Aorta (tissue), 5 donors: ENCODE measurements at regions of chr15 and their contacts with region 1.

Region 1: DNA sequence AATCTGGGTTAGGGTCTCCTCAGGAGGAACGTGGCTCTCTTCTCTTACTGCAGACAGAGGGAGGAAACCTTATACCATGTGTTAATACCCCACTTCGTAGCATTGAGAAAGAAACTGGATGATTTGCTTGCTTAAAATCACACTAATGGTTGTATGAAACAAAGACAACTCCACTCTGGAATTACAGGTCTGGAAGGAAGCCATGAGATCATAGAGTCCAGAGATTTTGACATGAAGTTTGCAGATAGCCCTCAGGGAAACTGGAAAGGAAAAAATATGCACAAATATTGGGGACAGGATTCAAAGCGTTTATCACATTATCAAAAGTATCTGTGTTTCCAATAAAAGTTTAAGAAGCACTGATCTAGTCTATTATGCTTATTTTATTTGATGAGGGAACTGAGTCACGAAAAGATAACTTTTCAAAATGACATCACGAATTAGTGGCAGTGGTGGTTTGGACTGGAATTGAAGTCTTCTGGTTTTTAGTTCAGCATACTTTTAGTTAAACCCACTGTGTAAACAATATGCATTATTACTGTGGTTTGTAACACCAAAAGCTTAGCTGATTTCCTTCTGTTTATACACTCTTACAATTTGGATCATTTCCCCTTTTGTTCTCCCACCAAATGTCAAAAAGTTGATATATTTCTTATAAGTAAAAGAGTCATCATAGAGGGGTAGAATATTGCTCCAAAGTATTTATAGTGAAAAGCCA is 16.8 kb downstream of the FGF7 start:
- DNase-seq: no peak
- ATAC-seq: no peak
- H3K4me3 ChIP-seq: no peak overlapping the region
- H3K27ac ChIP-seq: no peak overlapping the region
- H3K4me1 ChIP-seq: peaks cover 0 to 2% of the 10 kb centered on the region in 2 donors
- H3K27me3 ChIP-seq: no peaks in the 10 kb centered on the region

Region 2: GRCh38 chr15:49538520-49538919 is 98.7 kb after region 1 on chr15:
- intact Hi-C with region 1: no loop called
- DNase-seq: no peak
- ATAC-seq: no peak
- H3K4me3 ChIP-seq: no peak overlapping the region
- H3K27ac ChIP-seq: no peak overlapping the region
- H3K4me1 ChIP-seq: no peaks in the 10 kb centered on the region
- H3K27me3 ChIP-seq: no peaks in the 10 kb centered on the region

Region 3: GRCh38 chr15:50003786-50004334 is 564.0 kb after region 1 on chr15:
- intact Hi-C with region 1: loop called in 1 of 2 experiments (anchors 10 kb)
- DNase-seq: peak; percentile 88 to 93
- ATAC-seq: peak; percentile 94
- H3K4me3 ChIP-seq: no peak overlapping the region
- H3K27ac ChIP-seq: no peak overlapping the region
- H3K4me1 ChIP-seq: no peaks in the 10 kb centered on the region
- H3K27me3 ChIP-seq: no peaks in the 10 kb centered on the region